ENCODE measurements at regions of chr6 and their contacts with region 1.

Region 1: DNA sequence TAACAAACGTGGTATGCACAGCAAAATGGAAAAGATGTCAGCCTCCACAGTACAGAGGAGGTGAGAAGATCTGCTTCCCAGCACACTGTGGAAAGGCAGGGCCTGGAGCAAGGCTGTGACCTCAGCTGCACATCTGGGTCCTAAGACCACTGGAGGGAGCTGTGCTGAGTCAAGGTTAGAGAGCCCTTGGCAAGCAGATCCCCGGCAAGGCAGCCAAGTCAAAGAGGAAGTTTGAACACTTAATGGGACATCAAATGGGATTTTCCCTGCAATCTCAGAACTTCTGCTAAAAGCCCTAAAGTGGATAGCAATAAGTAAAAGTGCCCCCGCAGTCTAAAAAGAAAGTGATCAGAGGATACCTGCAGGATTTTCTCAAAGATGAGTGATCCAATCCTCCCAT is 39.5 kb downstream of the UNC5CL start:
- DNase-seq: peak; percentile 62
- H3K4me3 Mint-ChIP-seq: no peak overlapping the region
- H3K27ac Mint-ChIP-seq: peak overlapping the region; percentile 37
- H3K4me1 Mint-ChIP-seq: peaks cover 55% of the 10 kb centered on the region
- H3K27me3 Mint-ChIP-seq: no peaks in the 10 kb centered on the region
- CTCF ChIP-seq: no peak

Region 2: GRCh38 chr6:40325041-40325440 is 674.5 kb before region 1 on chr6:
- CTCF ChIA-PET with region 1: no interaction called
- intact Hi-C with region 1: no loop called
- DNase-seq: no peak
- H3K4me3 Mint-ChIP-seq: no peak overlapping the region
- H3K27ac Mint-ChIP-seq: no peak overlapping the region
- H3K4me1 Mint-ChIP-seq: no peaks in the 10 kb centered on the region
- H3K27me3 Mint-ChIP-seq: peaks cover 89% of the 10 kb centered on the region
- CTCF ChIP-seq: no peak

Region 3: DNA sequence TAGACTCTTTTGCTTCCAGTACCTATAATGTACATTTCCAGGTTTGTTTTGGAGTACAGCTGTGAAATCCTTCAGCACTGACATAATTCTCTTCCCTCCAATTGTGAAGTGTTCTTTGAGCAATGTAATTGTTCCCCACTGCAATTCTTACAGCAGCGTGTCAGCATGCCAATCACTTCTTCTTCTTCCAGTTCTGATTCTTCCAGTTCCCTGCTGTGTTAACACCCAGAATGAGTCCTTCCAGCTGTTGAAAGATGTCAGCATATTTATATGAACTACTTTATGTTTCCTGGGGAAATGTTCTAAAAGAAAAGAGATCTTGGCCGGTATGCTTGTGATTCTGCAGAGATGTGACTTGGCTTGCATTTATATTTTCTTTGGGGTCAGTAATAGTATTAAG is 174.5 kb before region 1 on chr6:
- CTCF ChIA-PET with region 1: no interaction called
- intact Hi-C with region 1: no loop called
- DNase-seq: no peak
- H3K4me3 Mint-ChIP-seq: no peak overlapping the region
- H3K27ac Mint-ChIP-seq: no peak overlapping the region
- H3K4me1 Mint-ChIP-seq: no peaks in the 10 kb centered on the region
- H3K27me3 Mint-ChIP-seq: peaks cover 60% of the 10 kb centered on the region
- CTCF ChIP-seq: no peak

Region 4: DNA sequence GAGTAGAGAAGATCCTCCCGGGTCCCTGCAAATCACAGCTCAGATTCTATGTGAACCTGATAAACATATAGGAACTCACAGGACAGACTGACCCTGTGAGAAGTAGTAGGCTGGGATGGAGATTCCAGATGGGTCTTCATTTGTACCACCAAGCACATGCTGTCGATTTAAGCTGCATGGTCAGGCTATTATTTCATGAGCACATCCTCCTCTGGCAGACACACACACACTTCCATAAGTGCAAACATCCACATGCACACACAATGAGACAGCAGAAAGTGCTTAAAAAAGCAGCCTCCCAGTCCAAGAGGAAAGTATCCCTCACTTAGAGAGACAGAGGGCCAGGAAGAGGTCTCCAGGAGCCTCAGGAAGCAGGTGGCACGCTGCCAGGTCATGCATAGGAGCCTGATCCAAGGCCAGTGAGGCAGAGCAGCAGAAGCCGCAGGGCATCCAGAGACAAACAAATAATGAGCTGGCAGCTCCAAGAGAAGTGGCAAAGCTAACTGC is 92.3 kb before region 1 on chr6:
- CTCF ChIA-PET with region 1: interaction called, 11 read pairs
- intact Hi-C with region 1: loop called (anchors 5 kb)
- DNase-seq: peak; percentile 66
- H3K4me3 Mint-ChIP-seq: peak overlapping the region; percentile 2
- H3K27ac Mint-ChIP-seq: peak overlapping the region; percentile 59
- H3K4me1 Mint-ChIP-seq: peaks cover 17% of the 10 kb centered on the region
- H3K27me3 Mint-ChIP-seq: peaks cover 11% of the 10 kb centered on the region
- CTCF ChIP-seq: no peak

Region 5: GRCh38 chr6:40912158-40912946 is 87.2 kb before region 1 on chr6:
- CTCF ChIA-PET with region 1: interaction called, 11 read pairs
- intact Hi-C with region 1: loop called (anchors 5 kb)
- DNase-seq: peak; percentile 72
- H3K4me3 Mint-ChIP-seq: no peak overlapping the region
- H3K27ac Mint-ChIP-seq: no peak overlapping the region
- H3K4me1 Mint-ChIP-seq: peaks cover 9% of the 10 kb centered on the region
- H3K27me3 Mint-ChIP-seq: peaks cover 43% of the 10 kb centered on the region
- CTCF ChIP-seq: peak; percentile 78

Region 6: GRCh38 chr6:40936818-40937251 is 62.7 kb before region 1 on chr6:
- CTCF ChIA-PET with region 1: no interaction called
- intact Hi-C with region 1: no loop called
- DNase-seq: no peak
- H3K4me3 Mint-ChIP-seq: no peak overlapping the region
- H3K27ac Mint-ChIP-seq: no peak overlapping the region
- H3K4me1 Mint-ChIP-seq: no peaks in the 10 kb centered on the region
- H3K27me3 Mint-ChIP-seq: peaks cover 63% of the 10 kb centered on the region
- CTCF ChIP-seq: no peak

Region 7: DNA sequence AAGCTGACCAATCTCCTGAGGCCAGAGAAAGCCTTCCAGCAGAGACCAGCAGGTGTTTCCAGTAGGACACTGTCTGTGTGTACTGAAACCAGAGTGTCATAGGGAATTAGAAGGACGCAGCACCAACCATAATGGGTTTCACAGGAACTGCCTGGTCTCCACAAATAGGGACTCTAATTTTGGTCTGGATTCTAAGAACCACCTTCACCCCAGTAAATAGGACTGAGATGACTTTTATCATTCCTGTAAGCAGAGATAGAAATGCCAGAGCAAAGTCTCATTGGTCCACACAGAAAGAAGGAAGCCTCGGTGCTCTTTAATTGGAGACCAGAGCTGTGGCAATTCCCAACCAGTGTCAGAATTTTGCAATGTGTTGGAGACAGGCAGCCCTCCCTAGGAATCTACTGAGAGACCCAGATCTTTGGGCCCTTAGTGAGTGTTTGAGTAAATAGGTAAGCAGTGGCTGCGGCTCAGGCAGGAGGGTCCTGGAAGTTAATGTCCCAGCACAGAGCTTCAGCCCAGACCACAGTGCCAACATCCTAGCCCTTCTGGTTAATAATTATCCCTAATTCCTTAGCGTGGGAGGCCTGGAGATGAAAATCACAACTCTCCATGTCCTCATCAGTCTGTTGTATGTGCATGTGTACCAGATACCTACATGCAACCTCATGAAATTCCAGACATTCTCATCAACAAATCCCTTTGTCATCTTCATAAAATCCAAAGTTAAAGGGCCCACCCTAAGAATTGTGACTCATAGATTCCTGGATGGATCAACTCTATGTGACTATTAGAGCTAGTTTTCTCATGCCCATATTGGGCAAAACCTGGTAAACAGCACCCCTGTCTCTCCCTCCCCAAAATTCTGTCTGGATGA is 41.7 kb before region 1 on chr6:
- CTCF ChIA-PET with region 1: interaction called, 3 read pairs
- intact Hi-C with region 1: loop called (anchors 5 kb)
- DNase-seq: no peak
- H3K4me3 Mint-ChIP-seq: no peak overlapping the region
- H3K27ac Mint-ChIP-seq: no peak overlapping the region
- H3K4me1 Mint-ChIP-seq: peaks cover 29% of the 10 kb centered on the region
- H3K27me3 Mint-ChIP-seq: peaks cover 19% of the 10 kb centered on the region
- CTCF ChIP-seq: no peak

Region 8: GRCh38 chr6:41039060-41039998 is 39.8 kb after region 1 on chr6 and contains the start of gene UNC5CL:
- CTCF ChIA-PET with region 1: interaction called, 18 read pairs
- intact Hi-C with region 1: loop called (anchors 5 kb)
- DNase-seq: peak; percentile 91
- H3K4me3 Mint-ChIP-seq: peak within 1 kb of the TSS; percentile 73
- H3K27ac Mint-ChIP-seq: peak within 1 kb of the TSS; percentile 90
- H3K4me1 Mint-ChIP-seq: peaks cover 58% of the 10 kb centered on the region
- H3K27me3 Mint-ChIP-seq: no peaks in the 10 kb centered on the region
- CTCF ChIP-seq: peak; percentile 76
- total RNA-seq, gene UNC5CL: 10.6 and 15.9 TPM in 2 replicates

Region 9: GRCh38 chr6:41072676-41073623 is 73.4 kb after region 1 on chr6 and contains the start of gene NFYA:
- CTCF ChIA-PET with region 1: interaction called, 15 read pairs
- intact Hi-C with region 1: no loop called
- DNase-seq: peak; percentile 100
- H3K4me3 Mint-ChIP-seq: peak within 1 kb of the TSS; percentile 83
- H3K27ac Mint-ChIP-seq: peak within 1 kb of the TSS; percentile 96
- H3K4me1 Mint-ChIP-seq: peaks cover 38% of the 10 kb centered on the region
- H3K27me3 Mint-ChIP-seq: no peaks in the 10 kb centered on the region
- CTCF ChIP-seq: peak; percentile 56
- total RNA-seq, gene NFYA: 22.9 and 23.7 TPM in 2 replicates

Region 10: DNA sequence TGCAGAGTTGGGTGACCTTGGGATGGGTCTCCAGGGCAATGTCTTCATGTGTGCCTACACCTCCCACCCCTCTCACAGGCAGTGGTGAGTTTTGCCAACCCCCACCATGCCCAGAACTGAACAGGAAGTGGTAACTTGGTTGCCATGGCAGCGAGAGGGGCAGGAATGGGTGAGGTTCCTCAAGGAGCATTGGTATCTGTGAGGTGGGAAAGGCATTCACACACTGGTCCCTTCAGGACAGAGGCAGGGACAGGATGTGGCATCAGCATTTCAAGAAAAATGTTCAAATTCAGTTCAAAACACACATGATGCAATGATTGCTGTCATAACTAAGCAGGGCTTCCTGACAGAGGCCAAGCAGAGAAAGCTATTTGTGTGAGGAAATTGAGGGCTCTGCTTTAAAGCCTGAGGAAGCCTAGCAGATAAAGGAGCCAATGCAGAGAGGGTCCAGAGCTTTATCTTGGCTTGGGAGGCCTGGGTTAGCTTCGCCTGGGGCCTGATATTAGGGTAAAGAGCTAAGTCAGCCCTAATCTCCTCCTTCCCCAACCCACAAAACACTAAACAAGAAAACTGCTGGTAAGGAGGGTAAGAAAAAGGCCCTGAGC is 200.8 kb after region 1 on chr6:
- CTCF ChIA-PET with region 1: no interaction called
- intact Hi-C with region 1: no loop called
- DNase-seq: peak; percentile 33
- H3K4me3 Mint-ChIP-seq: no peak overlapping the region
- H3K27ac Mint-ChIP-seq: no peak overlapping the region
- H3K4me1 Mint-ChIP-seq: peaks cover 10% of the 10 kb centered on the region
- H3K27me3 Mint-ChIP-seq: peaks cover 45% of the 10 kb centered on the region
- CTCF ChIP-seq: no peak

Measured in Calu3 (cell line).